ENCODE measurements at regions of chr2 and their contacts with region 1.

Region 1: GRCh38 chr2:63131196-63131595 is 80.6 kb downstream of the OTX1 start:
- DNase-seq: no peak
- H3K4me3 ChIP-seq: no peak overlapping the region
- CTCF ChIP-seq: no peak
- POLR2A ChIP-seq: no peak

Region 2: GRCh38 chr2:64128943-64129391 is 997.8 kb after region 1 on chr2:
- intact Hi-C with region 1: loop called (anchors 5 kb)
- DNase-seq: no peak
- H3K4me3 ChIP-seq: no peak overlapping the region
- CTCF ChIP-seq: no peak
- POLR2A ChIP-seq: no peak